ENCODE measurements at regions of chr10 and their contacts with region 1.

Region 1: GRCh38 chr10:31101123-31101522 is 69.5 kb upstream of the ZNF438 start:
- DNase-seq: peak; percentile 89
- H3K4me3 Mint-ChIP-seq: peak overlapping the region; percentile 8
- H3K27ac Mint-ChIP-seq: peak overlapping the region; percentile 92
- H3K4me1 Mint-ChIP-seq: peaks cover 48% of the 10 kb centered on the region
- H3K27me3 Mint-ChIP-seq: no peaks in the 10 kb centered on the region

Region 2: DNA sequence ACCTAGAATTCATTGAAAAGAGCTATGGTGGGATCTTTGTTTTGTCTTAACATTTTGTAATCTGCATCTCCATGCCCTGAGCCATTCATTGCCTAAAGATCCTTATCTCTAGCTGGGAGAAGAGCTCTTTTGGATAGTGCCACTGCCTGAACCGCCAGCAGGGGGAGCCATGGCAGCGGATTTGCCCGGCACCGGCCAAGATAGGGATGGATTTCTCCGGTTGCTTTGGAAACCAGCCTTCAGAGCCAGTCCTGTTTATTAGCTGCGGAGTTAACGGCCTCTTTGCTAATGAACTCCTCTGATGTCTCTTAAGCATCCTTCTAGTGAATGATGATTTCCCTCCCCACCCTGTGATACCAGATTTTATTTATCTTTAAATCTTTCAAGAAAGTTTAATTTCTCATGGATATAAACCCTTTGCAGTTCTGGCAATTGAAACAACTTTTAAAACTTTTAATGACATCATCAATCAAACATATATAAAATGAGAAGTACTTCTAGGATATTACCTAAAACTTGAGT is 413.4 kb before region 1 on chr10:
- CTCF ChIA-PET with region 1: no interaction called
- POLR2A ChIA-PET with region 1: no interaction called
- intact Hi-C with region 1: loop called (anchors 5 kb)
- DNase-seq: peak; percentile 89
- H3K4me3 Mint-ChIP-seq: no peak overlapping the region
- H3K27ac Mint-ChIP-seq: peak overlapping the region; percentile 78
- H3K4me1 Mint-ChIP-seq: peaks cover 71% of the 10 kb centered on the region
- H3K27me3 Mint-ChIP-seq: peaks cover 7% of the 10 kb centered on the region

Region 3: GRCh38 chr10:31083765-31084184 is 17.3 kb before region 1 on chr10:
- CTCF ChIA-PET with region 1: interaction called, 21 read pairs
- POLR2A ChIA-PET with region 1: no interaction called
- intact Hi-C with region 1: no loop called
- DNase-seq: peak; percentile 79
- H3K4me3 Mint-ChIP-seq: no peak overlapping the region
- H3K27ac Mint-ChIP-seq: no peak overlapping the region
- H3K4me1 Mint-ChIP-seq: peaks cover 3% of the 10 kb centered on the region
- H3K27me3 Mint-ChIP-seq: no peaks in the 10 kb centered on the region

Region 4: GRCh38 chr10:31146491-31147209 is 45.5 kb after region 1 on chr10:
- CTCF ChIA-PET with region 1: no interaction called
- POLR2A ChIA-PET with region 1: no interaction called
- intact Hi-C with region 1: no loop called
- DNase-seq: peak; percentile 29
- H3K4me3 Mint-ChIP-seq: no peak overlapping the region
- H3K27ac Mint-ChIP-seq: no peak overlapping the region
- H3K4me1 Mint-ChIP-seq: peaks cover 9% of the 10 kb centered on the region
- H3K27me3 Mint-ChIP-seq: peaks cover 10% of the 10 kb centered on the region

Region 5: GRCh38 chr10:31340343-31340742 is 239.2 kb after region 1 on chr10:
- CTCF ChIA-PET with region 1: no interaction called
- POLR2A ChIA-PET with region 1: no interaction called
- intact Hi-C with region 1: loop called (anchors 1 kb)
- DNase-seq: peak; percentile 38
- H3K4me3 Mint-ChIP-seq: no peak overlapping the region
- H3K27ac Mint-ChIP-seq: no peak overlapping the region
- H3K4me1 Mint-ChIP-seq: peaks cover 24% of the 10 kb centered on the region
- H3K27me3 Mint-ChIP-seq: no peaks in the 10 kb centered on the region

Region 6: GRCh38 chr10:31759799-31760626 is 658.9 kb after region 1 on chr10:
- CTCF ChIA-PET with region 1: no interaction called
- POLR2A ChIA-PET with region 1: no interaction called
- intact Hi-C with region 1: loop called (anchors 5 kb)
- DNase-seq: peak; percentile 97
- H3K4me3 Mint-ChIP-seq: peak overlapping the region; percentile 96
- H3K27ac Mint-ChIP-seq: peak overlapping the region; percentile 91
- H3K4me1 Mint-ChIP-seq: peaks cover 10% of the 10 kb centered on the region
- H3K27me3 Mint-ChIP-seq: no peaks in the 10 kb centered on the region